Psoas muscle (tissue), 8 donors: ENCODE measurements at regions of chr14 and their contacts with region 1.

Region 1: DNA sequence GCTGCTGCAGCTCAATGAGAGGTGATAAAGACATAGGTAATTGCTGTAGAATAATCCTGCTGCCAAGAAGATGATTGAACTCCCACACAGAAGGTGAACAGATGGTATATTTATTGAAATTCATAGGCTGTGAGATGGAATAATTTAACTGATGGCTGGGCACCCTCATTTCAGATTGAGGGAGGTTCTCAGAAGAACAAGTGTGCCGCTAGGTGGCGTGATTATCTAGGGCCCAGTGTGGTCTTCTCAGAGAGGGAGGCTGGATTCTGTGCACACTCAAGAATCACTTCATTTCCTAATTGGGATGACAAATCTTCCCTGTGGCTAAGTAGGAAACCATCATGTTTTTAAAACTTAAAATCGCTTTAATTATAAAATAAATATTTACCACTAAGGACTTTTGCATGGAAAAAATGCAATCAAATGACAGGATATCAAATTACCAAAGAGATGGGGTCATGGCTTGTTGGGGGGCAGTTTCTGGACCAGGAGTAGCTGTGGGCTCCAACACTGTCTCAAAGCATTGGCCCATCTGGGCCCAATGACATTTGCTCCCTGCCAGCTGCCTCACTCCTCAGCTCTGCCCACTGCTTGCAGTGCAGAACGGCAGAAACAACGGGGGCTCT is 132.3 kb downstream of the SNAPC1 start:
- DNase-seq: peak; percentile 12 to 52
- ATAC-seq: no peak
- H3K4me3 ChIP-seq: no peak overlapping the region
- H3K27ac ChIP-seq: no peak overlapping the region
- H3K4me1 ChIP-seq: no peaks in the 10 kb centered on the region
- H3K27me3 ChIP-seq: no peaks in the 10 kb centered on the region
- CTCF ChIP-seq: peak; percentile 39

Region 2: GRCh38 chr14:62126879-62127478 is 232.4 kb after region 1 on chr14:
- intact Hi-C with region 1: loop called in 1 of 2 experiments (anchors 10 kb)
- DNase-seq: no peak
- ATAC-seq: peak in 1 of 4 donors; percentile 61
- H3K4me3 ChIP-seq: no peak overlapping the region
- H3K27ac ChIP-seq: no peak overlapping the region
- H3K4me1 ChIP-seq: no peaks in the 10 kb centered on the region
- H3K27me3 ChIP-seq: peaks cover 0 to 20% (median 7%) of the 10 kb centered on the region in 3 donors
- CTCF ChIP-seq: peak; percentile 69